ENCODE measurements at regions of chr17 and their contacts with region 1.

Region 1: DNA sequence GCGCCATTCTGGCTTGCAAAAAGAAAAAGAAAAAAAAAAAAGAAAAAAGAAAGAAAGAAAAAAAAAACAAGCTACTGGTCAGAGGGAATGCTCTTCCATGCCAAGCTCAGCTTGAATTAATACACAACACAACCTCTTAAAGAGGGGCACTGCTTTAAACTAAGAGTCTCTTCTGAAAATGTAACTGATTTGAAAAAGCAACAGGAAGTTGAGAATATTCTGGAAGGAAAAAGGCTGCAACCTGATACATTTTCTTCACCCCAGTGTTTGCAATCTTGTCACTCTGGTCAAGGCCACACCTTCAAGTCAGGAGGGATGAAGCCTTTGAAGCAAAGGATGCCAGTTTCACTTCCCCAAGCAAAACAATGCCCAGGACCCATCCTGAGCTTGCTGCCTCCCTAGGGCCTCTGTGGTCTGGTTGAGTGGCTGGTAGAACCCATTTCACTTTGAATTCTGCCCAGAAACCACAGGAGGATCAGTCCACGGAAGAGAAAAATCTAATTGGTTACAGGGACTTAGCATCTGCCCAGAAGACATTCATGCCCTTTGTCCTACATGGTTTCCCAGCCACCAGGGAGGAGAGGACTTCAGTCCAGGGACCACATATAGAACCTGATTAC is 389.7 kb downstream of the SOX9 start:
- DNase-seq: no peak
- H3K4me3 ChIP-seq: no peak overlapping the region
- H3K27ac ChIP-seq: no peak overlapping the region
- H3K27me3 ChIP-seq: no peaks in the 10 kb centered on the region
- CTCF ChIP-seq: no peak

Region 2: GRCh38 chr17:72139212-72139611 is 371.3 kb before region 1 on chr17:
- CTCF ChIA-PET with region 1: interaction called, 10 read pairs
- POLR2A ChIA-PET with region 1: no interaction called
- DNase-seq: no peak
- H3K4me3 ChIP-seq: no peak overlapping the region
- H3K27ac ChIP-seq: no peak overlapping the region
- H3K27me3 ChIP-seq: no peaks in the 10 kb centered on the region
- CTCF ChIP-seq: no peak

Region 3: DNA sequence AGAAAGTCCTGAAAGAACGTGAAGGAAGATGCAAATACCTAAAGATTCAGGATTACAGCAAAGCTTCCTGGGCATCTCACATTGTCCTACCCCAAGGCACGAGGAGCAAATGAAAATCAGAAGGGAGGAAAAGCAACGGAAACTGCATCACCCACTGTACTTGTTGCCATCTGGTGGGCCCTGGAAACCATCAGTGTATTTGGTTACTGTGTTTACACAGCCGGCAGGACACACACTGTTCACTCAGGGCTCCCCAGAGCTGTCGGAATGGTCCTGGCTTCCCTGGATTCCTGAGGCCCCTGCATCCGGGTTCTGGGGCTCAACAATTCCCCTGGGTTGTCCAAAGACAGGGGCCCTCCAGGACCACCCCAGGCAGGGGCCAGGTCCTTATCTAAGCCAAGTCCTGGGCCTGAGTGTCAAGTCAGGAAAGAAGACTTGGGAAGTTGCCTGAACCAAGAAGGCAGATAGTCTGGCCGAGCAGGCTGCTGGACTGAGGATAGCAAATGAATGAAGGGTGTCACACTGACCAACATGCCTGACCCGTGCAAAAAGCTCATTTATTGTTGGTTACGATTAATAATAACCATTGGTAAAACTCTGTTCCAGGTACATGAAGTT is 336.9 kb before region 1 on chr17:
- CTCF ChIA-PET with region 1: no interaction called
- POLR2A ChIA-PET with region 1: interaction called, 10 read pairs
- DNase-seq: no peak
- H3K4me3 ChIP-seq: no peak overlapping the region
- H3K27ac ChIP-seq: no peak overlapping the region
- H3K27me3 ChIP-seq: peaks cover 2% of the 10 kb centered on the region
- CTCF ChIP-seq: no peak

Region 4: GRCh38 chr17:72569148-72569946 is 58.8 kb after region 1 on chr17:
- CTCF ChIA-PET with region 1: no interaction called
- POLR2A ChIA-PET with region 1: no interaction called
- DNase-seq: no peak
- H3K4me3 ChIP-seq: no peak overlapping the region
- H3K27ac ChIP-seq: no peak overlapping the region
- H3K27me3 ChIP-seq: no peaks in the 10 kb centered on the region
- CTCF ChIP-seq: no peak